IMR-90 (cell line): ENCODE measurements at regions of chr19 and their contacts with region 1.

Region 1: GRCh38 chr19:55146078-55146704 is 2.8 kb downstream of the TNNT1 start:
- DNase-seq: no peak
- ATAC-seq: 0 out of 2 replicates have a peak, but pooled peaks have one; percentile 15
- H3K4me3 ChIP-seq: no peak overlapping the region
- H3K27ac ChIP-seq: no peak overlapping the region
- H3K4me1 ChIP-seq: peaks cover 1% of the 10 kb centered on the region; the same call in 1 of the 2 replicates
- H3K27me3 ChIP-seq: peaks cover 53% of the 10 kb centered on the region
- CTCF ChIP-seq: peak; percentile 50
- POLR2A ChIP-seq: no peak
- RAD21 ChIP-seq: peak; percentile 30; the same call in 1 of the 2 replicates

Region 2: GRCh38 chr19:55301459-55302317 is 155.5 kb after region 1 on chr19:
- CTCF ChIA-PET with region 1: no interaction called
- POLR2A ChIA-PET with region 1: no interaction called
- dilution Hi-C with region 1: no loop called
- in situ Hi-C with region 1: no loop called
- intact Hi-C with region 1: loop called (anchors 10 kb)
- DNase-seq: peak; percentile 62
- ATAC-seq: peak; percentile 98
- H3K4me3 ChIP-seq: no peak overlapping the region
- H3K27ac ChIP-seq: no peak overlapping the region
- H3K4me1 ChIP-seq: no peaks in the 10 kb centered on the region
- H3K27me3 ChIP-seq: no peaks in the 10 kb centered on the region
- CTCF ChIP-seq: peak; percentile 89
- POLR2A ChIP-seq: no peak
- RAD21 ChIP-seq: peak; percentile 77

Region 3: DNA sequence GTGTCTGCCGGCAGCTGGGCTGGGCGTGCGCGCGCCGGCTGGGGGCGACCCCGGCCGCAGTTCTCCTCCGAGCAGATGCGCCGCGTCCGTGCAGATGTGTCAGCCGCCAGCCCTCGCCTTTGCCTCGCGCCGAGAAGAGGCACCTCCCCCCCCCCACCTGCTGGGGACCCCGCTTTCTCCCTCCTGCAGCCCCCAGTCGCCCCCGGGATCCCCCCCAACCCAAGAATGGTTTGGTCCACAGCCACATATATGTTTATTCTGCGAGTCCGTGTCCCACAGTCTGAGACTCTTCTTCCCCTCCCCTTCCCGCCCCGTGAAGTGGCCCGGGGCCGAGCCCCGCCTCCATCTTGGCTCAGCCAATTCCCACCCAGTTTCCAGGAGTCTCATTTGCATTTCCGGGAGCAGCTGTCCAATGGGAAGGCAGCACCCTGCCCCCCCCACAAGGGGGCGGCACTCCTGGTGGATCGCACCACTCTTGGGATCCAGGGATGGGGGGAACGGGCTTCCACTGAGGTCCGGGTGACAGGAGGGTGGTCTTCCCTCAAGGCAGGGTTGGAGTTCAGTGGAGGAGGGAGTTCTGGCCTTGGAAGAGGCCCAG is 306.7 kb after region 1 on chr19:
- CTCF ChIA-PET with region 1: no interaction called
- POLR2A ChIA-PET with region 1: no interaction called
- dilution Hi-C with region 1: no loop called
- in situ Hi-C with region 1: no loop called
- intact Hi-C with region 1: loop called (anchors 2 kb)
- DNase-seq: peak; percentile 79
- ATAC-seq: peak; percentile 87
- H3K4me3 ChIP-seq: no peak overlapping the region
- H3K27ac ChIP-seq: no peak overlapping the region
- H3K4me1 ChIP-seq: peaks cover 2% of the 10 kb centered on the region; the same call in 1 of the 2 replicates
- H3K27me3 ChIP-seq: peaks cover 29% of the 10 kb centered on the region
- CTCF ChIP-seq: 0 out of 2 replicates have a peak, but pooled peaks have one; percentile 11
- POLR2A ChIP-seq: no peak
- RAD21 ChIP-seq: no peak

Region 4: GRCh38 chr19:55503502-55504251 is 357.5 kb after region 1 on chr19:
- CTCF ChIA-PET with region 1: interaction called, 4 read pairs
- POLR2A ChIA-PET with region 1: no interaction called
- dilution Hi-C with region 1: no loop called
- in situ Hi-C with region 1: no loop called
- intact Hi-C with region 1: loop called (anchors 1 kb)
- DNase-seq: peak; percentile 90
- ATAC-seq: peak; percentile 98
- H3K4me3 ChIP-seq: peak overlapping the region; percentile 48
- H3K27ac ChIP-seq: peak overlapping the region; percentile 5; the same call in 1 of the 2 replicates
- H3K4me1 ChIP-seq: no peaks in the 10 kb centered on the region
- H3K27me3 ChIP-seq: no peaks in the 10 kb centered on the region
- CTCF ChIP-seq: peak; percentile 97
- POLR2A ChIP-seq: peak; percentile 62; the same call in 1 of the 2 replicates
- RAD21 ChIP-seq: peak; percentile 95